Common myeloid progenitor, CD34-positive (primary cell): ENCODE measurements at regions of chr2 and their contacts with region 1.

Region 1: DNA sequence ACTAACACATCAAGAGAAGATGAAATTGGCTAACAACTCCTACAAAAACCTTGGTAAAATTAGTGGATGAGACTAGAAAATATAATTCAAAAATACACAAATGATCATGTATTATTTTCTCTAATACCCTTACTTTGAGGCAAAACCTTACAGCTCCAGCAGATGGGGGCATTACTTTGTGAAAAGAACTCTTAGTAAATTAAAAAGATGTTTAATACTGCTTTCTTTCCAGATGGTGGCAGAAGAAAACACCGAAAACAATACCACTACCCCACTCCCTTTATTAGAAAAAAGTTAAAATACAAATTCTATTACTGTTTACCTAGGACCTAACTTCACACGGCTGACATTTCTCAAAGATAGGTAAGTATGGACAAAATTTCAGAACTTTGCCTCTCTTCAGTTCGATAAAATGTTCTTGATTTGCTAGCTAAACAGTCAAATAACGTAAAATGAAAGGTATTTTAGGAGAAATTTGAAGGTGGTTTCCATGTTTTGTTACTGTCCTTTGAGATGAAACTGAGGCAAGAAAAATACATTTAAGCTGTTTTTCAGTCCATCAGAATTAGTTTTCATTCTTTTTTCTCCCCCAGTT is 30.6 kb downstream of the ORC4 start:
- DNase-seq: peak; percentile 73 to 84 (median 79)
- H3K4me3 ChIP-seq: no peak overlapping the region
- H3K27ac ChIP-seq: peak overlapping the region in 1 of 2 experiments; percentile 52
- H3K4me1 ChIP-seq: peaks cover 0 to 6% (median 2%) of the 10 kb centered on the region in 4 experiments
- H3K27me3 ChIP-seq: no peaks in the 10 kb centered on the region

Region 2: DNA sequence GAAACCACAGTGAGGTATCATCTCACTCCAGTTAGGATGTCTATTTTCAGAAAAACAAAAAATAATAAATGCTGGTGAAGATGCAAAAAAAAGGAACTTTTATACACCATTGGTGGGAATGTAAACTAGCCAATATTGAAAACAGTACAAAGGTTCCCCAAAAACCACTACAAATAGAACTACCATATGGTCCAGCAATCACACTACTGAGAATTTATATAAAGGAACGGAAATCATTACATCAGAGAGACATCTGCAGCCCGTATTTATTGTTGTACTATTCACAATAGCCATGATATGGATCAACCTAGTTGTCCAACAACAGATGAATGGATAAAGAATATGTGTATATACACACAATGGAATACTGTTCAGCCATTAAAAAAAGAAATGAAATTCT is 21.3 kb before region 1 on chr2:
- CTCF ChIA-PET with region 1: no interaction called
- POLR2A ChIA-PET with region 1: no interaction called
- DNase-seq: no peak
- H3K4me3 ChIP-seq: no peak overlapping the region
- H3K27ac ChIP-seq: no peak overlapping the region
- H3K4me1 ChIP-seq: no peaks in the 10 kb centered on the region
- H3K27me3 ChIP-seq: no peaks in the 10 kb centered on the region

Region 3: DNA sequence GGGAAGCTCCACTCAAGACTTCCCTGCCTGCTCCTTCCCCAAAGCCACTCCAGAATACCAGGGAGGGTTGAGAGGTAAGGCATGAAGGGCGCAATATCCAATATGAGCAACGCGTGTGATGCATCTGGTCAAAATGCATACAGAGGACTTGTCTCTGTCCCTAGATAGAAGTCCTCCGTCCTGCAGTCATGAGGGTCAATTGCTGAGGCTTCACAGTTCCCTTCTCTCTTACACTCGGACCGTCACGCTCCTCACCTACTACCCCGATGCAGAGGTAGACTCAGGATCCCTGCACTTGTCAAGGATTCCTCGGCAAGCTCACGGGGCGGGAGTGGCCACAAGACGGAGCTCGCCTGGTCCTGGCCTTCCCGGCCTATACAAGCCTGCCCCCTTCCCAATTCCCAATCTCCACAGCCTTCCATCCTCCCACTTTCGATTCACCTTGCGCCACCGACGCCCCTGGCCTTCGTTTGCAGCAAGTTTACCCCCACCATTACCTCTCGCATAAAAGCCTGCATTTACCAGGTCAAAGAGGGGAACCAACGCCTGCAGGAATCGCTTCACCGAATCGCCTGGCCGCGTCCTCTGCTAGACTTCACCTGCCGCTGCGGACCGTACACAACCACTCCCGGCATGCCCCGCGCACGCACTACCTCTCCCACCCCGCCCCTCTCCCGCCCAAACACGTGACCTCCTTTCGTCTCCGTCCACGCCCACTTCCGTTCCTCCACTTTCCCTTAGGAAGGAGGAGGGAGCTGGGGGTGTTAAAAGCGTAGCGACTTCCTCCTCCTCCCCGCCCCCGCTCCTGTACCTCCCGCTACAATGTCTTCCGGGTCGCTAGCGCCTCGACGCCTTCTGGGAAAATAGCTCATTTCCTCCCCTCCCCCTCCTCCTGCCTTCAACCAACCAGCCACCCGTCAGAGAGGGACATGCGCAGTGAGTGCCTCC is 30.5 kb after region 1 on chr2 and contains the start of gene ORC4:
- CTCF ChIA-PET with region 1: interaction called, 10 read pairs
- POLR2A ChIA-PET with region 1: no interaction called
- DNase-seq: peak; percentile 99
- H3K4me3 ChIP-seq: peak within 1 kb of the TSS; percentile 78 to 100 (median 96)
- H3K27ac ChIP-seq: peak within 1 kb of the TSS; percentile 86 to 88
- H3K4me1 ChIP-seq: peaks cover 9 to 49% (median 30%) of the 10 kb centered on the region in 4 experiments
- H3K27me3 ChIP-seq: no peaks in the 10 kb centered on the region

Region 4: GRCh38 chr2:148509288-148509902 is 519.5 kb after region 1 on chr2:
- CTCF ChIA-PET with region 1: interaction called, 33 read pairs
- POLR2A ChIA-PET with region 1: no interaction called
- DNase-seq: peak; percentile 86 to 88 (median 87)
- H3K4me3 ChIP-seq: peak overlapping the region in 4 of 7 experiments; percentile 33 to 76 (median 59)
- H3K27ac ChIP-seq: peak overlapping the region in 1 of 2 experiments; percentile 39
- H3K4me1 ChIP-seq: peaks cover 2 to 34% (median 9%) of the 10 kb centered on the region in 4 experiments
- H3K27me3 ChIP-seq: no peaks in the 10 kb centered on the region

Region 5: GRCh38 chr2:148989882-148990493 is 1000.1 kb after region 1 on chr2:
- CTCF ChIA-PET with region 1: interaction called, 33 read pairs
- POLR2A ChIA-PET with region 1: no interaction called
- DNase-seq: peak; percentile 88 to 94 (median 88)
- H3K4me3 ChIP-seq: no peak overlapping the region
- H3K27ac ChIP-seq: no peak overlapping the region
- H3K4me1 ChIP-seq: peaks cover 0 to 12% (median 0%) of the 10 kb centered on the region in 4 experiments
- H3K27me3 ChIP-seq: no peaks in the 10 kb centered on the region